ENCODE measurements at regions of chr10 and their contacts with region 1.

Region 1: GRCh38 chr10:61750929-61751471 is 88.3 kb downstream of the CABCOCO1 start:
- DNase-seq: peak; percentile 45 to 83 (median 58)
- ATAC-seq: peak; percentile 97
- H3K4me3 ChIP-seq: no peak overlapping the region
- H3K4me3 Mint-ChIP-seq: peak overlapping the region; percentile 18
- H3K27ac ChIP-seq: no peak overlapping the region
- H3K27ac Mint-ChIP-seq: no peak overlapping the region
- H3K4me1 ChIP-seq: peaks cover 14% of the 10 kb centered on the region
- H3K4me1 Mint-ChIP-seq: peaks cover 29% of the 10 kb centered on the region
- H3K27me3 ChIP-seq: no peaks in the 10 kb centered on the region
- H3K27me3 Mint-ChIP-seq: no peaks in the 10 kb centered on the region
- CTCF ChIP-seq: peak; percentile 75

Region 2: GRCh38 chr10:61815496-61815895 is 64.5 kb after region 1 on chr10:
- CTCF ChIA-PET with region 1: no interaction called
- POLR2A ChIA-PET with region 1: no interaction called
- intact Hi-C with region 1: loop called in 1 of 2 experiments (anchors 5 kb)
- DNase-seq: no peak
- ATAC-seq: no peak
- H3K4me3 ChIP-seq: no peak overlapping the region
- H3K4me3 Mint-ChIP-seq: no peak overlapping the region
- H3K27ac ChIP-seq: no peak overlapping the region
- H3K27ac Mint-ChIP-seq: no peak overlapping the region
- H3K4me1 ChIP-seq: no peaks in the 10 kb centered on the region
- H3K4me1 Mint-ChIP-seq: no peaks in the 10 kb centered on the region
- H3K27me3 ChIP-seq: no peaks in the 10 kb centered on the region
- H3K27me3 Mint-ChIP-seq: no peaks in the 10 kb centered on the region
- CTCF ChIP-seq: no peak

Region 3: GRCh38 chr10:61835069-61835945 is 84.3 kb after region 1 on chr10:
- CTCF ChIA-PET with region 1: no interaction called
- POLR2A ChIA-PET with region 1: no interaction called
- intact Hi-C with region 1: loop called (anchors 2 to 5 kb)
- DNase-seq: peak in 3 of 14 experiments; percentile 41 to 47 (median 41)
- ATAC-seq: no peak
- H3K4me3 ChIP-seq: no peak overlapping the region
- H3K4me3 Mint-ChIP-seq: no peak overlapping the region
- H3K27ac ChIP-seq: no peak overlapping the region
- H3K27ac Mint-ChIP-seq: no peak overlapping the region
- H3K4me1 ChIP-seq: no peaks in the 10 kb centered on the region
- H3K4me1 Mint-ChIP-seq: peaks cover 14% of the 10 kb centered on the region
- H3K27me3 ChIP-seq: no peaks in the 10 kb centered on the region
- H3K27me3 Mint-ChIP-seq: no peaks in the 10 kb centered on the region
- CTCF ChIP-seq: peak; percentile 48

Region 4: GRCh38 chr10:61869774-61870525 is 119.0 kb after region 1 on chr10:
- CTCF ChIA-PET with region 1: interaction called, 20 read pairs
- POLR2A ChIA-PET with region 1: interaction called, 10 read pairs
- intact Hi-C with region 1: loop called in 1 of 2 experiments (anchors 5 kb)
- DNase-seq: no peak
- ATAC-seq: no peak
- H3K4me3 ChIP-seq: no peak overlapping the region
- H3K4me3 Mint-ChIP-seq: no peak overlapping the region
- H3K27ac ChIP-seq: no peak overlapping the region
- H3K27ac Mint-ChIP-seq: no peak overlapping the region
- H3K4me1 ChIP-seq: peaks cover 5% of the 10 kb centered on the region
- H3K4me1 Mint-ChIP-seq: no peaks in the 10 kb centered on the region
- H3K27me3 ChIP-seq: no peaks in the 10 kb centered on the region
- H3K27me3 Mint-ChIP-seq: no peaks in the 10 kb centered on the region
- CTCF ChIP-seq: no peak

Region 5: DNA sequence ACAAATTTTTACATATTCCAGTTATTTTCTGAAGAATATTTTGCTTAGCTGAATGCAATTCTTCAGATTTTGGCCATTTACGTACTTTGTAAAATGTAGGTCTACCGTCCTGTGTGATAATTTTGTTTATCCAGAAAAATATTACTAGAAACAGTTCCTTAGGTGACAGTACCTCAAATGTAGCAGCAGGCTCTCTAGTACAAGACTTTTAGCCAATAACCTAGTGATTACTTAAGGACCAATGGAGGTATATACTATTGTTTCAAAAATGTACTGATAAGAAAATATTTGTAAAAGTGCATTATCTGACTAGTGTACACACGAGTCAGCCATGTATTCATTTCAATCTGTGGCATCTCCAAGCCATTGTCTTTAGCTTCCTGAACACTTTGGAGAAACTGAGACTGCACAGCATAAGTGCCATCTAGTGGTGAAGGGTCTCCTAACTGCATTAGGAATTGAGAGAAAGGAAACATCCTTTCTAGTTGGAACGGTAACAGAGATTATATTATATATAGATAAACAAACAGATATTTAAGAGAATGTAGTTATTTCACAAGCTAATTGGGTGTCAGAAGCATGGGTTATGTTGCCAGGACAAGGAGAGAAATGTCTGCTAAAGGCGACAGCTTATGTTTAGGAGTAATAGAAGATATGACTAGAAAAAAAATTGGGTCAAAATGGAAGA is 493.9 kb after region 1 on chr10:
- CTCF ChIA-PET with region 1: interaction called, 9 read pairs
- POLR2A ChIA-PET with region 1: interaction called, 6 read pairs
- intact Hi-C with region 1: loop called (anchors 2 to 5 kb)
- DNase-seq: peak in 11 of 14 experiments; percentile 15 to 82 (median 35)
- ATAC-seq: peak; percentile 92
- H3K4me3 ChIP-seq: no peak overlapping the region
- H3K4me3 Mint-ChIP-seq: peak overlapping the region; percentile 5
- H3K27ac ChIP-seq: no peak overlapping the region
- H3K27ac Mint-ChIP-seq: peak overlapping the region; percentile 18
- H3K4me1 ChIP-seq: peaks cover 4% of the 10 kb centered on the region
- H3K4me1 Mint-ChIP-seq: peaks cover 39% of the 10 kb centered on the region
- H3K27me3 ChIP-seq: no peaks in the 10 kb centered on the region
- H3K27me3 Mint-ChIP-seq: no peaks in the 10 kb centered on the region
- CTCF ChIP-seq: peak; percentile 92

Region 6: DNA sequence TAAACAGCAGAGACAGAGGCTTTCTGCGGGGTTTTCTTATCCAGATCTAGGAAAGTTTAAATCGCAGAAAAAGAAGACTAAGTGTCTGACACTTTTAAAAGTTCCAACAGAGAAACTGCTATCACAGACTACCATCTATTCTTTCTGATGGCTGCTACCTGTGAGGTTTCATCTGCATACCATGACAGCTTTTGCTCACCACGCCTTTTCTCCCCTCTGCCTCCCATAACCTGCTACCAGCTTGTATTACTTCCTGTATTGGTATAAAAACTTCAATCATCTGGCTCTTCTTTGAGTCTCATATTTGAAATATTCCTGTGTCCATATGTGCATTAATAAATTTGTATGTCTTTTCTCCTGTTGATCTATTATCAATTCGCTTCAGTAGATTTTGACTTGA is 551.8 kb after region 1 on chr10:
- CTCF ChIA-PET with region 1: no interaction called
- POLR2A ChIA-PET with region 1: no interaction called
- intact Hi-C with region 1: no loop called
- DNase-seq: peak in 2 of 14 experiments; percentile 3 to 21
- ATAC-seq: peak; percentile 70
- H3K4me3 ChIP-seq: no peak overlapping the region
- H3K4me3 Mint-ChIP-seq: no peak overlapping the region
- H3K27ac ChIP-seq: no peak overlapping the region
- H3K27ac Mint-ChIP-seq: no peak overlapping the region
- H3K4me1 ChIP-seq: peaks cover 15% of the 10 kb centered on the region
- H3K4me1 Mint-ChIP-seq: peaks cover 46% of the 10 kb centered on the region
- H3K27me3 ChIP-seq: no peaks in the 10 kb centered on the region
- H3K27me3 Mint-ChIP-seq: no peaks in the 10 kb centered on the region
- CTCF ChIP-seq: no peak

Measured in CD4-positive, alpha-beta T cell (primary cell).